Common myeloid progenitor, CD34-positive (primary cell): ENCODE measurements at regions of chr11 and their contacts with region 1.

Region 1: GRCh38 chr11:117817368-117818040 is 7.0 kb downstream of the FXYD2 start:
- DNase-seq: peak; percentile 66 to 82 (median 77)
- H3K4me3 ChIP-seq: no peak overlapping the region
- H3K27ac ChIP-seq: no peak overlapping the region
- H3K4me1 ChIP-seq: peaks cover 4 to 71% (median 49%) of the 10 kb centered on the region in 4 experiments
- H3K27me3 ChIP-seq: no peaks in the 10 kb centered on the region

Region 2: DNA sequence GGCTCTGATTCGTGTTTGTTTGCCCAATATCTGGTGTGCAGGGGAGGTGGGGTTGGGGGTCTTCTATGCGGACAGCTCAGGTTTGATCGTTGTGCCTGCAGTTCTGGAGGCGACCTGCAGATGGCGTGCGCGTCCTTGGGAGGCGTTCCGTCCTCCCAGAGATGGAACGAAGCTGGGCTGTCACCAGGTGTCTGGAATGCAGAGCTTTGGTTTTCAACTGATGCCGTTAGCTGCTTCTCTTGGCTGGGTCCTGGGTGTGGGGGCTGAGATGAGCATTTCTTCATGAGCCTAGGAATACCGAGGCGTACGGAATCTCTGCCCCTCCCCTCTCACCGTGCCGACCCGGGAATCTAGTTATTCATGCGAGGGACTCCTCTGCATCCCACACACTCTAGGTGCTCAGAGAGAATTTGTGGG is 391.2 kb before region 1 on chr11:
- CTCF ChIA-PET with region 1: interaction called, 31 read pairs
- POLR2A ChIA-PET with region 1: no interaction called
- DNase-seq: peak; percentile 41 to 62 (median 50)
- H3K4me3 ChIP-seq: no peak overlapping the region
- H3K27ac ChIP-seq: no peak overlapping the region
- H3K4me1 ChIP-seq: no peaks in the 10 kb centered on the region
- H3K27me3 ChIP-seq: peaks cover 0 to 5% (median 0%) of the 10 kb centered on the region in 5 experiments

Region 3: GRCh38 chr11:117443266-117444195 is 374.0 kb before region 1 on chr11:
- CTCF ChIA-PET with region 1: interaction called, 25 read pairs
- POLR2A ChIA-PET with region 1: no interaction called
- DNase-seq: peak; percentile 66 to 80 (median 79)
- H3K4me3 ChIP-seq: peak overlapping the region in 2 of 7 experiments; percentile 3 to 28
- H3K27ac ChIP-seq: no peak overlapping the region
- H3K4me1 ChIP-seq: peaks cover 0 to 7% (median 0%) of the 10 kb centered on the region in 4 experiments
- H3K27me3 ChIP-seq: peaks cover 0 to 13% (median 8%) of the 10 kb centered on the region in 5 experiments

Region 4: GRCh38 chr11:117621226-117621625 is 196.3 kb before region 1 on chr11:
- CTCF ChIA-PET with region 1: no interaction called
- POLR2A ChIA-PET with region 1: no interaction called
- DNase-seq: peak in 2 of 3 donors; percentile 13 to 20
- H3K4me3 ChIP-seq: no peak overlapping the region
- H3K27ac ChIP-seq: no peak overlapping the region
- H3K4me1 ChIP-seq: no peaks in the 10 kb centered on the region
- H3K27me3 ChIP-seq: peaks cover 0 to 2% (median 0%) of the 10 kb centered on the region in 5 experiments

Region 5: DNA sequence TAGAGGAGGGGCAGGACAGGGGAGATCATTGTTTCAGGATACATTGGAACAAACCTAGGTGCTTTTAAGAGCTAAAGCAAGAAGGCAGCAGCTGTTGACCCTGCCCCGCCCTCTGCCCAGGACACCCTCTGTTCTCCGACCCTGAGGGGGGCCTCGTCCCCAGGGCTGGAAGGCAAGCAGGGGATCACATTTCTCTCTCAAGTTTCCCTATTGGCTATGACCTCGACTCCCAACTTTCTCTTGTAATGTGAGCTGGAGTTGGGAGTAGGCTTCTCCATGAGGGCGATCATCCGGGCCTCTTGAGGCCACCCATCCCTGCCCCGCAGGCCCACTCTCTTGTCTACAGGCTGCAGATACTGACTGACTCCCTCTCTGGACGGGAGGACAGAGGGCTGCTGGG is 58.2 kb before region 1 on chr11:
- CTCF ChIA-PET with region 1: no interaction called
- POLR2A ChIA-PET with region 1: no interaction called
- DNase-seq: no peak
- H3K4me3 ChIP-seq: no peak overlapping the region
- H3K27ac ChIP-seq: no peak overlapping the region
- H3K4me1 ChIP-seq: no peaks in the 10 kb centered on the region
- H3K27me3 ChIP-seq: no peaks in the 10 kb centered on the region

Region 6: GRCh38 chr11:117771197-117771596 is 46.3 kb before region 1 on chr11:
- CTCF ChIA-PET with region 1: no interaction called
- POLR2A ChIA-PET with region 1: no interaction called
- DNase-seq: no peak
- H3K4me3 ChIP-seq: no peak overlapping the region
- H3K27ac ChIP-seq: no peak overlapping the region
- H3K4me1 ChIP-seq: no peaks in the 10 kb centered on the region
- H3K27me3 ChIP-seq: peaks cover 0 to 5% (median 2%) of the 10 kb centered on the region in 5 experiments

Region 7: GRCh38 chr11:117828611-117829368 is 11.3 kb after region 1 on chr11:
- CTCF ChIA-PET with region 1: interaction called, 43 read pairs
- POLR2A ChIA-PET with region 1: interaction called, 3 read pairs
- DNase-seq: peak; percentile 85 to 97 (median 96)
- H3K4me3 ChIP-seq: peak overlapping the region in 3 of 7 experiments; percentile 10 to 23 (median 22)
- H3K27ac ChIP-seq: peak overlapping the region in 1 of 2 experiments; percentile 34
- H3K4me1 ChIP-seq: peaks cover 0 to 73% (median 58%) of the 10 kb centered on the region in 4 experiments
- H3K27me3 ChIP-seq: no peaks in the 10 kb centered on the region

Region 8: GRCh38 chr11:117843666-117844484 is 26.4 kb after region 1 on chr11:
- CTCF ChIA-PET with region 1: interaction called, 63 read pairs
- POLR2A ChIA-PET with region 1: no interaction called
- DNase-seq: peak; percentile 59 to 80 (median 73)
- H3K4me3 ChIP-seq: no peak overlapping the region
- H3K27ac ChIP-seq: no peak overlapping the region
- H3K4me1 ChIP-seq: peaks cover 0 to 18% (median 14%) of the 10 kb centered on the region in 4 experiments
- H3K27me3 ChIP-seq: no peaks in the 10 kb centered on the region

Region 9: GRCh38 chr11:117907251-117907981 is 89.9 kb after region 1 on chr11:
- CTCF ChIA-PET with region 1: interaction called, 22 read pairs
- POLR2A ChIA-PET with region 1: interaction called, 5 read pairs
- DNase-seq: peak; percentile 75 to 92 (median 91)
- H3K4me3 ChIP-seq: peak overlapping the region in 3 of 7 experiments; percentile 13 to 57 (median 14)
- H3K27ac ChIP-seq: peak overlapping the region in 1 of 2 experiments; percentile 58
- H3K4me1 ChIP-seq: peaks cover 0 to 27% (median 7%) of the 10 kb centered on the region in 4 experiments
- H3K27me3 ChIP-seq: no peaks in the 10 kb centered on the region

Region 10: GRCh38 chr11:118051611-118052461 is 234.3 kb after region 1 on chr11:
- CTCF ChIA-PET with region 1: interaction called, 115 read pairs
- POLR2A ChIA-PET with region 1: no interaction called
- DNase-seq: peak in 2 of 3 donors; percentile 35 to 43
- H3K4me3 ChIP-seq: no peak overlapping the region
- H3K27ac ChIP-seq: no peak overlapping the region
- H3K4me1 ChIP-seq: peaks cover 0 to 28% (median 6%) of the 10 kb centered on the region in 4 experiments
- H3K27me3 ChIP-seq: no peaks in the 10 kb centered on the region